Ovary (tissue), 10 donors: ENCODE measurements at regions of chr9 and their contacts with region 1.

Region 1: DNA sequence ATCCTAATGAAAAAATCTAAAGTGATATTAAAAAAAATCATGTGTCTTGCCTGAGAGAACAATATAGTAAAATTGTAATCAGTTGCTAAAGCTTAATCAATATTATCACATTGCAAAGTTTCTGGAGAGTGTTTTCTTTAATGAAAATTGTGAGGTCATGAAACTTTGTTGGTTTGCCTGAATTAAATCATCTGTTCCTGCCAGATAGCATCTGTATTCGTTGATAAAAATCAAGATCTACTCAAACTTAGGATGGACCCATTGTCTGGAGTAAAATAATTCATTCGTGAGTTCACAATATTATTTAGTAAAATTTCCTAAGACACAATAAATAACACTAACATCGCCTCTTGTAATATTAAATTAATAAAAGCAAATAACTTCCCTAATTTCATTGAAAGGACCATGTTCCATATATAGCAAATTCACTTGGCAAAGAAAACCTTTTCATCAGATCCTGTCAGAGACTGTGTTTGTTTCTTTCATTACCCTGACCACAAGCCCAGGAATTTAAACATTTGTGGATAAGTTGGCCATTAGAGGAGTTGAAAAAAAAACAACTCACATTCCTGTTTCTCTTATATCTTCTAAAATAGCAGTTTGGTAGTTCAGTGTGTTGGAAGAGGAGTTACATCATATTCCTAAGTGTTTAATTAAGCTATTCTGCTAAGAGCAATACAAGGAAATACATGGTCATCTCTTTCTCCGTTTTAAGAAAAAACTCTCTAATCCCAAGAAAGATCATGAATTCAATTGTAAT is 505.8 kb downstream of the TLE1 start:
- DNase-seq: no peak
- H3K4me3 ChIP-seq: no peak overlapping the region
- H3K27ac ChIP-seq: no peak overlapping the region
- H3K4me1 ChIP-seq: no peaks in the 10 kb centered on the region
- H3K27me3 ChIP-seq: no peaks in the 10 kb centered on the region
- CTCF ChIP-seq: no peak
- EP300 ChIP-seq: no peak
- POLR2A ChIP-seq: no peak

Region 2: GRCh38 chr9:81171689-81172088 is 11.9 kb before region 1 on chr9:
- intact Hi-C with region 1: loop called in 1 of 4 experiments (anchors 2 kb)
- DNase-seq: no peak
- H3K4me3 ChIP-seq: no peak overlapping the region
- H3K27ac ChIP-seq: no peak overlapping the region
- H3K4me1 ChIP-seq: no peaks in the 10 kb centered on the region
- H3K27me3 ChIP-seq: no peaks in the 10 kb centered on the region
- CTCF ChIP-seq: no peak
- EP300 ChIP-seq: no peak
- POLR2A ChIP-seq: no peak